ENCODE measurements at regions of chr15 and their contacts with region 1.

Region 1: DNA sequence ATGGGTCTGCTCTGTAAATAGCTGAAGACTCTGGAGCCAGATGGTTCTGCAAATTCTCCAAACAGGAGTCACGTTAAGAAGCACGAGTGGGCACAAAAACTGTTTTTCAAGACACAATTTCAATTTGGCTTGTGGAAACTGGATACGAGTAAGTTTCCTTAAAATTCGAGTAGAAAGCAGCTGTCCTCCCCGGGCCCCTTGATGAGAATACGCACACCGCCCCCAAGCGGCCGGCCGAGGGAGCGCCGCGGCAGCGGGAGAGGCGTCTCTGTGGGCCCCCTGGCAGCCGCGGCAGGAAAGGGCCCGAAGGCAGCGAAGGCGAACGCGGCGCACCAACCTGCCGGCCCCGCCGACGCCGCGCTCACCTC is 778 bp upstream of the THBS1 start:
- DNase-seq: peak; percentile 77 to 81 (median 80)
- ATAC-seq: peak; percentile 96
- H3K4me3 ChIP-seq: peak overlapping the region; percentile 24
- H3K27ac ChIP-seq: no peak overlapping the region
- H3K4me1 ChIP-seq: peaks cover 0 to 12% of the 10 kb centered on the region in 2 experiments; a peak in 1 of 5 replicates
- H3K27me3 ChIP-seq: peaks cover 26 to 40% of the 10 kb centered on the region in 2 experiments; a peak in 4 of 5 replicates
- CTCF ChIP-seq: peak; percentile 85 to 98 (median 95)
- EP300 ChIP-seq: no peak
- POLR2A ChIP-seq: no peak
- RAD21 ChIP-seq: peak; percentile 89 to 93

Region 2: GRCh38 chr15:38707802-38708671 is 872.1 kb before region 1 on chr15:
- CTCF ChIA-PET with region 1: interaction called, 10 read pairs
- POLR2A ChIA-PET with region 1: no interaction called
- in situ Hi-C with region 1: no loop called
- intact Hi-C with region 1: loop called (anchors 10 kb)
- DNase-seq: peak; percentile 51 to 68 (median 62)
- ATAC-seq: peak; percentile 95
- H3K4me3 ChIP-seq: no peak overlapping the region
- H3K27ac ChIP-seq: no peak overlapping the region
- H3K4me1 ChIP-seq: no peaks in the 10 kb centered on the region
- H3K27me3 ChIP-seq: peaks cover 9 to 12% of the 10 kb centered on the region in 2 experiments
- CTCF ChIP-seq: peak; percentile 58 to 78 (median 71)
- EP300 ChIP-seq: no peak
- POLR2A ChIP-seq: no peak
- RAD21 ChIP-seq: peak; percentile 72 to 80

Region 3: DNA sequence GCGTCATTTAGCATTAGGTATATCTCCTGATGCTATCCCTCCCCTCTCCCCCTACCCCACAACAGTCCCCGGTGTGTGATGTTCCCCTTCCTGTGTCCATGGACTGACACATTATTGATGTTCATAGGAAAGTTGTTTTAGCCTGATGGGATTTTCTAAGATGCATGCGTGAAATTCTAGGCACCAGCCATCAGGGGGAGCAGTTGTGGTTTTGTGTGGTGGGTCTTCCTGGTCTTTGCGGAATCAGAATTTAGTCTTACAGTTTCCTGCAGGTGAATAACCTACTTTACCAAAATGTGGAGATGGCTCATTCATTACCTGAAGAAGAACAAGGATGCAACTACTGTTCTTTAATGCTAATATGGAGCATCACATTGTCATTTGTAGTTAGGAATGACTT is 454.2 kb before region 1 on chr15:
- CTCF ChIA-PET with region 1: interaction called, 7 read pairs
- POLR2A ChIA-PET with region 1: no interaction called
- in situ Hi-C with region 1: no loop called
- intact Hi-C with region 1: loop called (anchors 5 kb)
- DNase-seq: peak; percentile 61 to 70 (median 64)
- ATAC-seq: peak; percentile 71
- H3K4me3 ChIP-seq: no peak overlapping the region
- H3K27ac ChIP-seq: no peak overlapping the region
- H3K4me1 ChIP-seq: peaks cover 0 to 17% of the 10 kb centered on the region in 2 experiments; a peak in 3 of 5 replicates
- H3K27me3 ChIP-seq: peaks cover 11 to 15% of the 10 kb centered on the region in 2 experiments; a peak in 4 of 5 replicates
- CTCF ChIP-seq: peak; percentile 64 to 72 (median 68)
- EP300 ChIP-seq: no peak
- POLR2A ChIP-seq: no peak
- RAD21 ChIP-seq: peak; percentile 38 to 67; a peak in 3 of 4 replicates

Region 4: GRCh38 chr15:39312984-39313383 is 267.1 kb before region 1 on chr15:
- CTCF ChIA-PET with region 1: no interaction called
- POLR2A ChIA-PET with region 1: no interaction called
- in situ Hi-C with region 1: no loop called
- intact Hi-C with region 1: loop called (anchors 10 kb)
- DNase-seq: peak in 3 of 4 experiments; percentile 9 to 11 (median 10)
- ATAC-seq: no peak
- H3K4me3 ChIP-seq: no peak overlapping the region
- H3K27ac ChIP-seq: no peak overlapping the region
- H3K4me1 ChIP-seq: no peaks in the 10 kb centered on the region
- H3K27me3 ChIP-seq: no peaks in the 10 kb centered on the region
- CTCF ChIP-seq: peak in 2 of 3 experiments; percentile 24 to 34; a peak in 3 of 6 replicates
- EP300 ChIP-seq: no peak
- POLR2A ChIP-seq: no peak
- RAD21 ChIP-seq: peak in 1 of 2 experiments; percentile 48; a peak in 2 of 4 replicates

Region 5: DNA sequence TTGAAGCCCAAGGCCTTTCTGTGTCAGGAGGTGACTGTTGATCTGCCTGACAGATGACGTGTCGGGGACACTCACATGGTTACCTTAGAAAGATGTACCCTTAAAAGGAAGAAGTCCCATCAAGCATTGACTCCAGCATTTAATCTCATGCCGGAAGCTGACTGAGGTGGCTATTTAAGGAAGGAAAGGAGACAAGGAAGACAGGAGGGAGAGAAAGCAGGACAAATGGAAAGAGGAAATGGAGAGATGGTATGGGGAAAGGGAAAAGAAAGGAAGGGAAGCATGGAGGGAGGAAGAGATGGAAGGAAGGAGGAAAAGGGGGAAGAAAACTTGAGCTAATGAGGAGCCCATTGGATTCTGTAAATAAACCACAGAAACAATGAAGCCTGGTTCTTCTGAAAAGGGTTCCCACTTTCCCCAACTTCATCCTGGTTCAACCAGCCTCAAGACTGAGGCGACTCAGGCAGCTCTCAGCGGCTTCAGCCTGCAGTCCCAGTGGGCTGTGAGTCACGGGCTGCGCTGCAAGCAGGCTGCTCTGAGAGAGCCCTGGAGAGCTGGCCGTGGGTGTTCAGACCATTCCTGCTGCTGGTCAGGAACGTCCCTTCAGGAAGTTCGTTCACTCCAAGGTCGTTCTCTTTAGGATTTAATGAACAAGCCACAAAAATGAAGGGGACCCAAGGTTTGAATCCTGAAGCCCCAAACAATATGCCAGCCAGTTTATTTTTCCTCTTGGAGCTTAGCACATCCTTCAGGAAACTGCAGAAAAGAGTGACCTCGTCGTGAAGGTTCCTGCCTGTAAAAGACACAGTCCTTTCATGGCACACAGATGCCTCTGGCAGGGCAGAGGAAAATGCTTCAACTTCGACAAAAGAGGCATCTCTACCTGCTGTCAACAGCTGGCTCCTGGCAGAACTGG is 68.8 kb before region 1 on chr15:
- CTCF ChIA-PET with region 1: no interaction called
- POLR2A ChIA-PET with region 1: no interaction called
- in situ Hi-C with region 1: no loop called
- intact Hi-C with region 1: loop called (anchors 5 kb)
- DNase-seq: peak; percentile 16 to 55 (median 31)
- ATAC-seq: peak; percentile 88
- H3K4me3 ChIP-seq: no peak overlapping the region
- H3K27ac ChIP-seq: no peak overlapping the region
- H3K4me1 ChIP-seq: peaks cover 11 to 21% of the 10 kb centered on the region in 2 experiments; a peak in 4 of 5 replicates
- H3K27me3 ChIP-seq: no peaks in the 10 kb centered on the region
- CTCF ChIP-seq: no peak
- EP300 ChIP-seq: no peak
- POLR2A ChIP-seq: no peak
- RAD21 ChIP-seq: no peak

Region 6: GRCh38 chr15:39565851-39566250 is 14.2 kb before region 1 on chr15:
- CTCF ChIA-PET with region 1: no interaction called
- POLR2A ChIA-PET with region 1: no interaction called
- in situ Hi-C with region 1: no loop called
- intact Hi-C with region 1: no loop called
- DNase-seq: no peak
- ATAC-seq: no peak
- H3K4me3 ChIP-seq: no peak overlapping the region
- H3K27ac ChIP-seq: no peak overlapping the region
- H3K4me1 ChIP-seq: no peaks in the 10 kb centered on the region; a peak in 1 of 5 replicates
- H3K27me3 ChIP-seq: peaks cover 16 to 29% of the 10 kb centered on the region in 2 experiments
- CTCF ChIP-seq: no peak
- EP300 ChIP-seq: no peak
- POLR2A ChIP-seq: no peak
- RAD21 ChIP-seq: no peak

Measured in K562 (cell line).